MCF 10A (cell line): ENCODE measurements at regions of chr1 and their contacts with region 1.

Region 1: DNA sequence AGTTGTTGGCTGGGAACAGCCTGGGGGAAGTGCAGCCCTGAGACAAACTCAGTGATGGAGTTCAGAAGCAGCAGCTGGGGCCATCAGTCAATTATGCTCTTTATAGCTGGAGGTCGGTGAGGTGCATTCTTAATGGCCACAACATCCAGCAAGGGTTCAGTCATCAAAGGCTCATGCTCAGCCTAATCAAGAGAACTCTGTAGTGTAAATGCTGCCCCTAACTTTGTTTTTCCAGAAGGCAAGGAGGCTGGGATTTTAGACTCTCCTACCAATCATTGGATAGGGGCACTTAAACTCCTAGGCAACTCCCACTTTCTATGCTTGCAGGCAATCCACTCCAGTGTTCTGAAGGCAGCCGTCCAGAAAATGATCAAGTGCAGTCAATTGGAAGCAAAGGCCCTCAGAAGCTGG is 15.0 kb upstream of the RGS4 start:
- DNase-seq: no peak
- H3K4me3 Mint-ChIP-seq: no peak overlapping the region
- H3K27ac Mint-ChIP-seq: no peak overlapping the region
- H3K4me1 Mint-ChIP-seq: peaks cover 11% of the 10 kb centered on the region
- H3K27me3 Mint-ChIP-seq: no peaks in the 10 kb centered on the region
- CTCF ChIP-seq: no peak

Region 2: GRCh38 chr1:162861101-162861500 is 193.1 kb before region 1 on chr1 and contains the start of gene CCDC190:
- CTCF ChIA-PET with region 1: no interaction called
- POLR2A ChIA-PET with region 1: no interaction called
- intact Hi-C with region 1: no loop called
- DNase-seq: no peak
- H3K4me3 Mint-ChIP-seq: no peak within 1 kb of the TSS
- H3K27ac Mint-ChIP-seq: no peak within 1 kb of the TSS
- H3K4me1 Mint-ChIP-seq: peaks cover 17% of the 10 kb centered on the region
- H3K27me3 Mint-ChIP-seq: peaks cover 52% of the 10 kb centered on the region
- CTCF ChIP-seq: no peak
- total RNA-seq, gene CCDC190: not detected in 2 replicates

Region 3: DNA sequence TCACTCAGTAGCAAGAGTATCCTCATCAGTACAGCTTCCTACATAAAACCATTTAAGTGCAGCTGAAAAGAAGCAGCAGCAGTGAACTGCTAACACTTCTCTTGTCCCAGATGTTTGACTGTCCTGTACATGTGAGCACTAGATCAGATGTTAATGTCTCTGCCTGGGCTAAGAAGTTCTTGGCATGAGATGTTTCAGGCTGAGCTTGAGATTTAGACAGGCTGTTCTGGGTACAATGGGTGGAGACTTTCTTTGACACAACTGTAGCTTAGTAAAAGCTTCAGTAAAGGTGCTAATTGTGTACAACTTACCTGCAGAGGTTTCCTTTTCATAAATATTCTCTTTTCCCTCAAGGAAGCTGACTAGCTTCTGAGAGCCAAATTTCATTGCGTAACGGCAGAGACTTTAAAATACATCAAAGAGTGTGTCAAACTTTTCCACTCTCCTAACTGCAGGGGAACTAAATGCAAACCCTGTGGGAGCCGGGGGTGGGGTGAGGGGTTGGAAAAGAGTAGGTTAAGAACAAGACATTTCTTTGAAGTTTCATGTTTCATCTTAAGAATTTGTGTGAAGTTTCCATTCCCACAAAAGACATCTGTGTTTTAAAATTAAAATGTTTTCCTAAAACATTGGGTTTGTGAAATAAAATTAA is 111.1 kb before region 1 on chr1:
- CTCF ChIA-PET with region 1: no interaction called
- POLR2A ChIA-PET with region 1: no interaction called
- intact Hi-C with region 1: loop called (anchors 10 kb)
- DNase-seq: peak; percentile 55
- H3K4me3 Mint-ChIP-seq: no peak overlapping the region
- H3K27ac Mint-ChIP-seq: no peak overlapping the region
- H3K4me1 Mint-ChIP-seq: peaks cover 11% of the 10 kb centered on the region
- H3K27me3 Mint-ChIP-seq: no peaks in the 10 kb centered on the region
- CTCF ChIP-seq: no peak